Heart left ventricle (tissue), 16 donors: ENCODE measurements at regions of chr14 and their contacts with region 1.

Region 1: GRCh38 chr14:90060312-90060964 is 1.4 kb upstream of the KCNK13 start:
- DNase-seq: peak; percentile 24 to 77 (median 68)
- ATAC-seq: peak in 3 of 4 donors; percentile 79 to 89 (median 86)
- H3K4me3 ChIP-seq: peak overlapping the region; percentile 27 to 62 (median 48)
- H3K27ac ChIP-seq: peak overlapping the region in 2 of 12 donors; percentile 11 to 46
- H3K4me1 ChIP-seq: peaks cover 0 to 29% (median 17%) of the 10 kb centered on the region in 12 donors
- H3K27me3 ChIP-seq: peaks cover 9 to 91% (median 34%) of the 10 kb centered on the region in 9 donors
- CTCF ChIP-seq: peak; percentile 25 to 64 (median 46)
- POLR2A ChIP-seq: no peak

Region 2: GRCh38 chr14:89973234-89973823 is 87.1 kb before region 1 on chr14:
- intact Hi-C with region 1: loop called in 2 of 10 experiments (anchors 5 to 10 kb)
- DNase-seq: peak; percentile 27 to 73 (median 68)
- ATAC-seq: peak in 3 of 4 donors; percentile 87 to 88 (median 87)
- H3K4me3 ChIP-seq: no peak overlapping the region
- H3K27ac ChIP-seq: no peak overlapping the region
- H3K4me1 ChIP-seq: no peaks in the 10 kb centered on the region
- H3K27me3 ChIP-seq: no peaks in the 10 kb centered on the region
- CTCF ChIP-seq: peak; percentile 71 to 92 (median 82)
- POLR2A ChIP-seq: no peak

Region 3: GRCh38 chr14:89983375-89983774 is 77.1 kb before region 1 on chr14:
- intact Hi-C with region 1: loop called in 2 of 10 experiments (anchors 10 kb)
- DNase-seq: no peak
- ATAC-seq: no peak
- H3K4me3 ChIP-seq: no peak overlapping the region
- H3K27ac ChIP-seq: no peak overlapping the region
- H3K4me1 ChIP-seq: no peaks in the 10 kb centered on the region
- H3K27me3 ChIP-seq: no peaks in the 10 kb centered on the region
- CTCF ChIP-seq: no peak
- POLR2A ChIP-seq: no peak

Region 4: DNA sequence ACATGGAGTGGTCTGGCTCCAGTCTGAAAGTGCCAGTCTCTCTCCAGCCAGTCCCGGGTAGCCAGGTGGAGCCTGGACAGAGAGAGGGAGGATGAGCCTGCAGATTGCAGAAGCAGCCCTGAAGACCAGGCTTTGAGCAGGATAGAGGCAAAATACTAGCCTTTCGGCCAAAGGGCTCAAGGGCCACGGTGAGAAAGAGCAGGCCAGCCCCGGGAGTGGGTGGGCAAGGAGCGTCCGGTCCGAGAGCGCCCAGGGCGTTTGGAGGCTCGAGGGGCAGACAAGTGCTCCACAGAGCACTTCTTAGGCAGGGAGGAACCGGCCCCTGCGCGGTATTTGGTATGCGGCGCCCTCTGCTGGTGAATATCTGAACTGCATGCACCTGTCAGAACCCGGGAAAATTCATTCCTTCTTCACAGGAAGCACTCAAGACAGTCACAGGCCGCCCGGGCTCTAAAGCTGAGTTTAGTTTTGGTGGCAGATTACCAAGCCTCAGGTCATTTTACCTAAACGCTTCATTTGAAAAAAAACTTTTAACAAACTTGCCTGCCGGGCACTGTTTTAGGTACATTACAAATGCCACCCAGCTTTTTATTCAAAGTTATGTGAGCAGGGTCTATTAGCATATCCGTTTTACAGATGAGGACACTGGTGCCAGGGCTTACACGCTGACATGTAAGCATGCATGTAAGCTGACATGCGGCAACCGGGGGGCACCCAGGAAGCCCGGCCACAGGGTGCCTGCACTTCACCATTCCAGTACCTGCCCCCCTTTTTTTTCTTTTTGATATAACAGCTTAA is 174.9 kb after region 1 on chr14:
- intact Hi-C with region 1: loop called in 1 of 10 experiments (anchors 5 kb)
- DNase-seq: peak; percentile 34 to 82 (median 55)
- ATAC-seq: peak; percentile 37 to 89 (median 82)
- H3K4me3 ChIP-seq: no peak overlapping the region
- H3K27ac ChIP-seq: no peak overlapping the region
- H3K4me1 ChIP-seq: peaks cover 0 to 4% (median 0%) of the 10 kb centered on the region in 12 donors
- H3K27me3 ChIP-seq: peaks cover 0 to 4% (median 0%) of the 10 kb centered on the region in 9 donors
- CTCF ChIP-seq: peak; percentile 77 to 99 (median 89)
- POLR2A ChIP-seq: no peak